Right cardiac atrium (tissue), 5 donors: ENCODE measurements at regions of chr15 and their contacts with region 1.

Region 1: GRCh38 chr15:64640146-64640871 is 135.1 kb downstream of the RBPMS2 start:
- DNase-seq: no peak
- ATAC-seq: peak; percentile 44 to 50
- H3K4me3 ChIP-seq: no peak overlapping the region
- H3K27ac ChIP-seq: no peak overlapping the region
- H3K4me1 ChIP-seq: peaks cover 7% of the 10 kb centered on the region
- H3K27me3 ChIP-seq: no peaks in the 10 kb centered on the region

Region 2: DNA sequence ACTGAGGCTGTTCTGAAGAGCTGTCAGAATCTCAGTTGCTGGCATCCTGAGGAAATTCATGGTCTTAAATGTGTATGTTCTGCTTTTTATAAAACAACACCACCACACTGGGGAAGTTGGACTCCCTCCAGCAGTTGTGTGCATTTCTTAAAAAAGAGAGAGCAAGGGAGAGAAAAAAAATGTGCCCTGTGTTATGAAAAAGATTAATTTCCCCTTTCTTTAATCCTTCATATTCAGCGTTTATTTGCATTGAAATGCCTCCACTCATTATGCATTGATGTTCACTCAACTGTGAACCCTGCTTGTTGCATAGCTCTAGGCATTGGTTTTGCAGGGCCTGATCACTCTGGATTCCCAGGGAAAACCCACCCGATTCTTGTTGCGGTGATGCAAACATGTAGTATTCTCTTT is 184.3 kb before region 1 on chr15:
- intact Hi-C with region 1: loop called in 1 of 4 experiments (anchors 10 kb)
- DNase-seq: peak in 2 of 3 donors; percentile 33 to 64
- ATAC-seq: no peak
- H3K4me3 ChIP-seq: no peak overlapping the region
- H3K27ac ChIP-seq: no peak overlapping the region
- H3K4me1 ChIP-seq: no peaks in the 10 kb centered on the region
- H3K27me3 ChIP-seq: no peaks in the 10 kb centered on the region

Region 3: DNA sequence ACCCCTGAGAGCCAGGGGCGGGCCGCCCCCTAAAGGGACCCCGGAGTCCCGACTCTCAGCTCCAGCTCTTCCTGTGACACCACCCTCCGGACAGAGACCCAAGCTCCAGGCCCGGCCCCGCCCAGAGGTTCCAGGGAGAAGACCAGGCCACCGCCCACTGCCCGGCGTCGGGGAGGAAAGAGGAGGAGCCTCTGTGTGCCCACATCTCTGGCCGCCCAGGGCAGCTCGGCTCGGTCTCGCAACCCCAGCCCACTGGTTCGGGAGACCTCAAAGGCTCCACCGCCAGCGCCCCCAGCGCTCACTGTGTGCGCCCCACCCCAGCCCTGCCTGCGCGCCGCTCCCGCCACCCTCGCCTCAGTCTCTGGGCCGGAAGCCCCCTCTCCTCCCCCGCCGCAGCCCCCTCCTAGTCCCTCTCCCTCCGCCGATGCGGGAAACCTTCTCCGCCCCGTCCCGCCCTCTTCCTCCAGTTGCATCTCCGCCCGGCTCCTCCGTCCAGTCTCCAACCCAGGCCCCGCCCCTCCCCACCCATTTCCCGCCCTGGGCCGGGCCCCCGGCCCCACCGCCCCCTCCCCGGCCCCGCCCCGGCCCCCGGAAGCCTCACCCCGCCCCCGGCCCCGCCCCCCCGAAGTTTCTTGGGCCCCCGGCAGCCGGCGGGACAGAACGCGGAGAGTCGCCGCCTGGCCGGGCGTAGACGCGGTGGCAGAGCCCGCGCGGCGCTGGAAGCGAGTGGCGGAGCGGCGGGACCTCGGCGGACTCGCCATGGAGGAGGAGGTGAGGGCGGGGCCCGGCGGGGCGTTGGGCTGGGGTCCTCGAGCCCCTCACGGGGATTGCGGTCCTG is 201.2 kb after region 1 on chr15 and contains the start of gene PLEKHO2:
- intact Hi-C with region 1: no loop called
- DNase-seq: peak; percentile 98 to 99 (median 99)
- ATAC-seq: peak; percentile 89 to 92
- H3K4me3 ChIP-seq: peak within 1 kb of the TSS; percentile 90
- H3K27ac ChIP-seq: peak within 1 kb of the TSS; percentile 84
- H3K4me1 ChIP-seq: peaks cover 8% of the 10 kb centered on the region
- H3K27me3 ChIP-seq: no peaks in the 10 kb centered on the region
- total RNA-seq, gene PLEKHO2: 11.6 to 22.3 (median 13.8) TPM